Lower leg skin (tissue), 4 donors: ENCODE measurements at regions of chr2 and their contacts with region 1.

Region 1: GRCh38 chr2:108533832-108534583 is at the start of gene LIMS1:
- DNase-seq: peak; percentile 89 to 97
- H3K4me3 ChIP-seq: peak within 1 kb of the TSS; percentile 57
- CTCF ChIP-seq: no peak
- POLR2A ChIP-seq: no peak
- total RNA-seq, gene LIMS1: 43.6 to 89.3 (median 59.6) TPM

Region 2: DNA sequence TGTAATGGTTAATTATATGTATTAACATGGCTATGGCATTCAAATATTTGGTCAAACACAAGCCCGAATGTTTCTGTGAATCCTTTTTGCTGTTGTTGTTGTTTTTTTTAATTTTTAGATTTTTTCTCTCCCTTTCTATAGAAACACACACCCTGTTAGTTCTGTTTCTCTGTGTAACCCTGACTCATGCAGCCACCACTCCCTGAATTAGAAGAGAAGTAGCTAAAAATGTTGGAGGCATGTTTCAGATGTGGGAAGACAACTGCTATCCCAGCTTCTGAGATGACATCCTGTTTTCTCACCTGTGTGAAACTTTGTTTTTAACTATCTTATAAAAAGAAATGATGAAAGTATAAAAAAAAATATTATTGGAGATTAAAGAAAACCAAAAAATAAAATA is 927.0 kb before region 1 on chr2:
- intact Hi-C with region 1: no loop called
- DNase-seq: no peak
- H3K4me3 ChIP-seq: no peak overlapping the region
- CTCF ChIP-seq: no peak
- POLR2A ChIP-seq: no peak

Region 3: DNA sequence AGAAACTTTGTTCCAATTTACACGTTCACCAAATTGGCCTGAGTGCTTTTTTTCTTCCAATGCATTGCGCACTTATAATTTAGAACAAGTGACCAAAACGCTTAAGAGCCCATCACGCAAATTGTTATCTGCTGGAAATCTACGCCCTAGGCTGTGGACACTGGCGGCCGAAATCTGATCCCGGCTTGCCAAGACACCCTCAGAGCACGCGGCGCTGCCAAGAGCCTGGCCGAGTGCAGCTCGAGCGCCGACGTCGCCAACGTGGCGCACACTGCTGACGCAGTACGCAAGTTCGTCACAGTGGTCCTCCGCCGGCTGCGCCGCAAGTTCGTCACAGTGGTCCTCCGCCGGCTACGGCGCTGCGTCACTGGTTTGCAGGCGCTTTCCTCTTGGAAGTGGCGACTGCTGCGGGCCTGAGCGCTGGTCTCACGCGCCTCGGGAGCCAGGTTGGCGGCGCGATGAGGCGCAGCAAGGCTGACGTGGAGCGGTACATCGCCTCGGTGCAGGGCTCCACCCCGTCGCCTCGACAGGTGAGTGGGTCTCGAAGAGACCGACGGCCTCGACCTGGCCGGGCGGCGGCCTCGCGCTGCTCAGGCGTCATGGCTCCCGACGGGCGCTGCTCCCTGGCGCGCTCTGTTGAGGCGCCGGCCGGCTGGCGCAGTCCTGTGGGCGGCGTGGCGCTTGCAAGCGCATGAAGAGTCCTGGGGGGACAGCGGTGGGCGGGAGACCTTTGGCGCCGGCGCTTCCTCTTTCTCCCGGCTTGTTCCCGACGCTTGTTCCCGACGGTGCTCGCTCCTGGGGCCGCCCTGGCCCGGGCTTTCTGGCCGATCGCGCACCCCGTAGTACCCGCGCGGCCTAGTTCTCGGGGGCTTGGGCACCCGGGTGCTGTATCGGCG is 185.4 kb after region 1 on chr2 and contains the start of gene RANBP2:
- intact Hi-C with region 1: loop called (anchors 10 kb)
- DNase-seq: peak; percentile 92 to 99
- H3K4me3 ChIP-seq: peak within 1 kb of the TSS; percentile 80
- CTCF ChIP-seq: no peak
- POLR2A ChIP-seq: peak in 1 of 2 donors; percentile 82
- total RNA-seq, gene RANBP2: 56.0 to 64.9 (median 60.5) TPM